Activated T-helper 2 cell treated with anti-CD3 and anti-CD28 coated beads, Interferon-gamma antibody, Interleukin-2, Interleukin-4, amounts not matched to agents 10 μg/mL and 5 μg/mL and 100 μg/mL, durations not matched to agents 14 hours and 24 hours and 36 hours (primary cell): ENCODE measurements at regions of chr4 and their contacts with region 1.

Region 1: GRCh38 chr4:104896660-104897645 is 249.7 kb upstream of the TET2 start:
- DNase-seq: no peak
- H3K4me3 Mint-ChIP-seq: no peak overlapping the region
- H3K27ac Mint-ChIP-seq: no peak overlapping the region
- H3K4me1 Mint-ChIP-seq: no peaks in the 10 kb centered on the region
- H3K27me3 Mint-ChIP-seq: peaks cover 7% of the 10 kb centered on the region

Region 2: GRCh38 chr4:104859601-104860237 is 37.2 kb before region 1 on chr4:
- intact Hi-C with region 1: no loop called
- DNase-seq: no peak
- H3K4me3 Mint-ChIP-seq: no peak overlapping the region
- H3K27ac Mint-ChIP-seq: no peak overlapping the region
- H3K4me1 Mint-ChIP-seq: no peaks in the 10 kb centered on the region
- H3K27me3 Mint-ChIP-seq: peaks cover 16% of the 10 kb centered on the region

Region 3: DNA sequence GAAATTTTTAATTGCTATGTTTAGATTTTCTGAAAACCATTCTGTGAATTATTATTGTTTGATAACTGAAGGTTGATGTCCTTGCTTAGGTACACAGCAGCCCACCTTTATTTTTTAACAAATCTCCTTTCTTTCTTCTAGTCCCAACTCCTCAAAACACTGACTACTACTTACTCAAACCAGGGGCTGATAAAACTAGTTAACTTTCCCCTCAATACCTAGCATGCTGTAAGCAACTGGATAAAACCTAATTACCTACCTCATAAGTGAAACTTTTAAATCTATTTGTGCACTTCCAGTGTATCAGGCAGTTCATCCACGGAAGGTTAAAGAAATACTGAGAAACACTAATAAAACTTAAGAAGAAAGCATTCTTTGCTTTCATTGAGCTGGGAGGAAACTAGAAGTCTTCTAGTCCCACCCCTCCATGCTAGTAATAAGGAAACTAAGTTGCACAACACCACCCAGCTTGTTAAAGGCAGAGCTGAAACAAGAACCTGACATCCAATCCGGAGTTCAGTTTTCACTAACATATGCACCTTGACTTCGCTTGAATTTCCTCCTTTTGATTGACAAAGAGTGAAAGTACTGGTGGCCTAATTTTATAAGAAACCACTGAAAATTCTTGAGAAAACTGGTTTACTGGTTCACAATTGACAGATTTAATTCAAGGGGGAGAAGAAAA is 69.5 kb after region 1 on chr4:
- intact Hi-C with region 1: loop called (anchors 2 kb)
- DNase-seq: peak; percentile 43
- H3K4me3 Mint-ChIP-seq: peak overlapping the region; percentile 66
- H3K27ac Mint-ChIP-seq: peak overlapping the region; percentile 86
- H3K4me1 Mint-ChIP-seq: peaks cover 39% of the 10 kb centered on the region
- H3K27me3 Mint-ChIP-seq: peaks cover 4% of the 10 kb centered on the region